Activated CD4-positive, alpha-beta memory T cell treated with anti-CD3 and anti-CD28 coated beads for 36 hours (primary cell): ENCODE measurements at regions of chr22 and their contacts with region 1.

Region 1: GRCh38 chr22:30634471-30635233 is 929 bp upstream of the SLC35E4 start:
- DNase-seq: peak; percentile 95
- H3K4me3 Mint-ChIP-seq: peak overlapping the region; percentile 81
- H3K27ac Mint-ChIP-seq: peak overlapping the region; percentile 88
- H3K4me1 Mint-ChIP-seq: peaks cover 20% of the 10 kb centered on the region
- H3K27me3 Mint-ChIP-seq: no peaks in the 10 kb centered on the region

Region 2: DNA sequence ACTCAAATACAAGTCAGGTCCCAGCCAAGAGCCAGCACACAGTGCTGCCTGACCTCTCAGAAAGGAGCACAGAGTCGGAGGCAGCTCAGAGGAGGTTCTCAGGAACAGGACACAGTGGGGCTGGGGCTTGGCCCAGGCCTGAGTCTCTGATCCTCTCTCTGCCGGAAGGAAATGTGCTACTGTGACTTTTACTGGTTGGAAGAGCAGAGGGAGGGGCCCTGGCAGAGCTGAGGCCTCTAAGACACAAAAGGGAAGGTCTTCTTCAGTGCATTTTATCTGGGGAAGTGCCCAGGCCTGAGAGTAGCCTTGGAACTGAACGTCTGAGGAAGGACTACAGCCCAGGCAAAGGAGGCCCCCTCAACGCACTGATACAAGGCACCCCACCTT is 329.1 kb before region 1 on chr22:
- CTCF ChIA-PET with region 1: no interaction called
- POLR2A ChIA-PET with region 1: no interaction called
- intact Hi-C with region 1: no loop called
- DNase-seq: peak; percentile 74
- H3K4me3 Mint-ChIP-seq: peak overlapping the region; percentile 69
- H3K27ac Mint-ChIP-seq: peak overlapping the region; percentile 98
- H3K4me1 Mint-ChIP-seq: peaks cover 96% of the 10 kb centered on the region
- H3K27me3 Mint-ChIP-seq: no peaks in the 10 kb centered on the region

Region 3: GRCh38 chr22:30574997-30575671 is 59.5 kb before region 1 on chr22:
- CTCF ChIA-PET with region 1: no interaction called
- POLR2A ChIA-PET with region 1: no interaction called
- intact Hi-C with region 1: no loop called
- DNase-seq: no peak
- H3K4me3 Mint-ChIP-seq: no peak overlapping the region
- H3K27ac Mint-ChIP-seq: no peak overlapping the region
- H3K4me1 Mint-ChIP-seq: peaks cover 3% of the 10 kb centered on the region
- H3K27me3 Mint-ChIP-seq: no peaks in the 10 kb centered on the region

Region 4: DNA sequence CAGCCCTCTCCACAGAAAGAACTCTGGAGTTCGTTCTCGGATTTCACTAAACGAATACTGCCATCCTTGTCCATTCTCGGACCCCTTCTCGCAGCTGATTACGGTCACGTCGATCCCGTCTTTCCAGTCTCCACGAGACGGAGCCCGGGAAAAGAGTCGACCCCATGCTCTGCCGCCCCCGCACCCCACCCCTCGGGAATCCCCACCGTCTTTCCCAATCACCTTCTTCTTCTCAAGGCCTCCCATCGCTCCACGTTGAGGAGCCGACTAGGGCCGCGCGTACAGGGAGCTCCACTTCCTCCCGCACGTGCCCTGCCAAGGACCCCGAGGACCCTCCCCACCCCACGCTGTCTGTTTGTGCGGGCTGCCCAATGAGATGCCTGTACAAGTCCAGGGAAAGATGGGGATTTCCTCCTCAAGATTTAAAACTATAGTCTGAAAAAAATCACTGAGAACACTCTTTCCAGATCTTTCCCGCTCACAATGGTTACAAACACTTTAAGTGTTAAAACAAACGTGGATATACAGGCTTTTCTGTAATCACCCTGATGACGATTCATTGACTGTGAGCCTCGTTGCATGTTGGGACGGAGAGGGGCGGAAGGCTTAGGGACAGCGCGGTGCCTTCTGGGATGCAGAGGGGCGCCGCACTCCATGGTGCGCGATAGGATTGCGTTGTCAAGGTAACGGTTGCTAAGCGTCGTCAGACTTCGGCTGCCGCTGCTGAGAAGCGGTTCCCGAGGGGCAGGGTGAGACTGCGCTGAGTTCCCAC is 42.9 kb before region 1 on chr22 and contains the start of gene PES1:
- CTCF ChIA-PET with region 1: interaction called, 12 read pairs
- POLR2A ChIA-PET with region 1: no interaction called
- intact Hi-C with region 1: loop called (anchors 1 kb)
- DNase-seq: peak; percentile 96
- H3K4me3 Mint-ChIP-seq: no peak within 1 kb of the TSS
- H3K27ac Mint-ChIP-seq: no peak within 1 kb of the TSS
- H3K4me1 Mint-ChIP-seq: peaks cover 4% of the 10 kb centered on the region
- H3K27me3 Mint-ChIP-seq: peaks cover 7% of the 10 kb centered on the region
- total RNA-seq, gene PES1: 99.3 to 99.6 TPM

Region 5: GRCh38 chr22:30667494-30668385 is 33.1 kb after region 1 on chr22 and contains the start of gene DUSP18:
- CTCF ChIA-PET with region 1: interaction called, 30 read pairs
- POLR2A ChIA-PET with region 1: interaction called, 4 read pairs
- intact Hi-C with region 1: loop called (anchors 1 kb)
- DNase-seq: peak; percentile 97
- H3K4me3 Mint-ChIP-seq: peak within 1 kb of the TSS; percentile 96
- H3K27ac Mint-ChIP-seq: peak within 1 kb of the TSS; percentile 62
- H3K4me1 Mint-ChIP-seq: peaks cover 21% of the 10 kb centered on the region
- H3K27me3 Mint-ChIP-seq: peaks cover 3% of the 10 kb centered on the region
- total RNA-seq, gene DUSP18: 9.2 to 10.6 TPM

Region 6: GRCh38 chr22:30742291-30743256 is 107.9 kb after region 1 on chr22:
- CTCF ChIA-PET with region 1: interaction called, 49 read pairs
- POLR2A ChIA-PET with region 1: interaction called, 12 read pairs
- intact Hi-C with region 1: loop called (anchors 1 kb)
- DNase-seq: peak; percentile 78
- H3K4me3 Mint-ChIP-seq: peak overlapping the region; percentile 33
- H3K27ac Mint-ChIP-seq: peak overlapping the region; percentile 95
- H3K4me1 Mint-ChIP-seq: peaks cover 70% of the 10 kb centered on the region
- H3K27me3 Mint-ChIP-seq: peaks cover 2% of the 10 kb centered on the region

Region 7: DNA sequence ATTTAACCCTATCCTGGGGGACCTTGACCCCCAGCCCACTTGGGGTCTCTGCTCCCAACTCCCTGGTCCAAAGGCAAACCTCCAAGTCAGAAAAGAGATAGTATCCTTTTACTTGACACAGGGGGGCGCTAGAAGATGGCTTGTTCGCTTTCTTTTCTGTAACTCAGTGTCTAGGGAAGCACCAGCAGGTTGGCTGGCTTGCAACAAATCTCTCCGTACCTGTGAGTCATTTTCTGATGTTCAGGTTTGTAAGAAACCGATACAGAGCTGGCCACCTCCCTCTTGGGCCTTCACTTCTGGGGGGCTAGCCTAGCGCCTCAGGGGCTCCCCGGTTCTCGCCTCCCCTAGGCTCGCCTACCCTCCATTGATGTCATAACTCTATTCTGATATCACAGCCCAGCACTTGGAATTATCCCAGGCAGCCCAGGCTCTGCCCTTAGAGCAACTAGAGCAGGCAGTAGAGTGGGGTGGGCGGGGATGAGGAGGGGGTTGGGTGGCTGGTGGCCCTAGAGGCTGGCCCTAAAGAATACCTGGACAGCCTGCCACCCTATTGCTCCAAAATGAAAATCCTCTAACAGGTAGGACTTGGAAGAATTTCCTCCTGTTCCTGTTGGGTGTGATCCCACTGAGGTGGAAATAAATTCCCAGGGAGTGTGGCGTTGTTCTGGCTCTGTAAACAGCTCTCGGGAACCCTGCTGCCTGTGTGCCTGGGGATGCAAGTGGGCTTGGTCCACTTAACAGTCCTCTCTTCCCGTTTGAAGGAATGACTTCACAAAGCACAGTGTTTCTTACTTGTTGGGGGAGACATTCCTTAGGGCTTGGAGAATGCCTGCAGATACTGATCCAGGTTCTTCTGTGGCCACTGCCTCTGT is 129.4 kb after region 1 on chr22:
- CTCF ChIA-PET with region 1: interaction called, 21 read pairs
- POLR2A ChIA-PET with region 1: no interaction called
- intact Hi-C with region 1: no loop called
- DNase-seq: peak; percentile 66
- H3K4me3 Mint-ChIP-seq: no peak overlapping the region
- H3K27ac Mint-ChIP-seq: no peak overlapping the region
- H3K4me1 Mint-ChIP-seq: no peaks in the 10 kb centered on the region
- H3K27me3 Mint-ChIP-seq: no peaks in the 10 kb centered on the region

Region 8: GRCh38 chr22:31080848-31081649 is 446.4 kb after region 1 on chr22 and contains the start of gene SMTN:
- CTCF ChIA-PET with region 1: interaction called, 7 read pairs
- POLR2A ChIA-PET with region 1: no interaction called
- intact Hi-C with region 1: loop called (anchors 5 kb)
- DNase-seq: peak; percentile 92
- H3K4me3 Mint-ChIP-seq: peak within 1 kb of the TSS; percentile 85
- H3K27ac Mint-ChIP-seq: peak within 1 kb of the TSS; percentile 45
- H3K4me1 Mint-ChIP-seq: peaks cover 30% of the 10 kb centered on the region
- H3K27me3 Mint-ChIP-seq: no peaks in the 10 kb centered on the region
- total RNA-seq, gene SMTN: 55.1 to 57.4 TPM

Region 9: GRCh38 chr22:31093086-31093850 is 458.6 kb after region 1 on chr22:
- CTCF ChIA-PET with region 1: no interaction called
- POLR2A ChIA-PET with region 1: no interaction called
- intact Hi-C with region 1: no loop called
- DNase-seq: no peak
- H3K4me3 Mint-ChIP-seq: no peak overlapping the region
- H3K27ac Mint-ChIP-seq: no peak overlapping the region
- H3K4me1 Mint-ChIP-seq: no peaks in the 10 kb centered on the region
- H3K27me3 Mint-ChIP-seq: no peaks in the 10 kb centered on the region